Esophagus muscularis mucosa (tissue), 4 donors: ENCODE measurements at regions of chr6 and their contacts with region 1.

Region 1: DNA sequence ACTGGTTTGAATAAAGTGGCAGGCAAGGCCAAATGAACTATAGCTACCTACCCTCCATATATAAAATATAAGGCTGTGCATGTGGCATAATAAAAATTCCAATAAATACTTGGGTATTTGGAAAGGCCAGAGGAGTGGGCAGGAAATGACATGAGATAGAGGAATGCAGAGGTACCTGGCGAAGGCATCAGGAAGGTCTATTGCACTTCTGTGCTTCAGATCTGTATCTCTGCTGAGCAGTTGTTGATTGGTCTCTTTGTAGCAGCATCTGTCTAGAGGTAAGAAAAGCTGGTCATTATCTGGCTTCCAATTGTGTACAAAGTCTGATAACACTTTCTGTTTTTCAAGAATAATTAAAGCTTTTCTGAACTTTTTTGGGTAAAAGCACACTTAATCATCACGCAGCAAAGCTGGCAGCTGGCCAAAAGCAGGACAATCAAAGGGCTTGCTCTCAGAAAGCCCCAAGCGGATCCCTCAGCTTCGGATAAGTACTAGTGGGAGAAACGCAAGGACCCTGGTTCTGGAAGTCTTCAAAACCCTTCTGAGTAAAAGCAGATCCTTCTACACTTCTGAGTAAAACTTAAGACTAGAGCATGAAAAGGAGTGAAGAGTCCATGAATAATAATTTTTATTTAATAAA is 120.1 kb upstream of the TCF21 start:
- DNase-seq: no peak
- H3K4me3 ChIP-seq: no peak overlapping the region
- H3K27ac ChIP-seq: no peak overlapping the region
- H3K4me1 ChIP-seq: peaks cover 0 to 18% (median 16%) of the 10 kb centered on the region in 4 donors
- H3K27me3 ChIP-seq: no peaks in the 10 kb centered on the region
- CTCF ChIP-seq: no peak
- EP300 ChIP-seq: no peak
- POLR2A ChIP-seq: no peak

Region 2: GRCh38 chr6:133577851-133578250 is 190.9 kb before region 1 on chr6:
- intact Hi-C with region 1: loop called (anchors 10 kb)
- DNase-seq: no peak
- H3K4me3 ChIP-seq: no peak overlapping the region
- H3K27ac ChIP-seq: no peak overlapping the region
- H3K4me1 ChIP-seq: no peaks in the 10 kb centered on the region
- H3K27me3 ChIP-seq: no peaks in the 10 kb centered on the region
- CTCF ChIP-seq: no peak
- EP300 ChIP-seq: no peak
- POLR2A ChIP-seq: no peak

Region 3: GRCh38 chr6:133724726-133725125 is 44.0 kb before region 1 on chr6:
- intact Hi-C with region 1: no loop called
- DNase-seq: no peak
- H3K4me3 ChIP-seq: no peak overlapping the region
- H3K27ac ChIP-seq: no peak overlapping the region
- H3K4me1 ChIP-seq: no peaks in the 10 kb centered on the region
- H3K27me3 ChIP-seq: no peaks in the 10 kb centered on the region
- CTCF ChIP-seq: no peak
- EP300 ChIP-seq: no peak
- POLR2A ChIP-seq: no peak